ENCODE measurements at regions of chr9 and their contacts with region 1.

Region 1: DNA sequence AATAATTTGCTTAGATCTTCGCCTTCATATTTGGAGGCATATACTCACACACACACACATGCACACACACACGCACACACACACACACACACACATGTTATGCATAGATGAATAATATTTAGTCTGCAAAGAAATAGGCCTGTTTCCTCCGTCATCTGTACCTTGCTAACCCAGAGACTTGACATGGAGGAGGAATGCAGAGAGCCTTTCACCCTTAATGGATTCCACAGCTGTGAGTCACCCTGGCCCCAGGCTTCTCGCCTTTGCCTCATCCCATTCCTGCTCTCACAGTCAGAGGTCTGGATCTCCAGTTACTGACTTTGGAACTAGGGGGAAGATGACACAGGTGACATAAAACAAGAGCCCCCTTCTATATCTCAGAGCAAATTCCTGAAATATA is 29.7 kb downstream of the ZNF462 start:
- DNase-seq: peak; percentile 89
- H3K4me3 ChIP-seq: no peak overlapping the region
- H3K27ac ChIP-seq: peak overlapping the region; percentile 93
- H3K4me1 ChIP-seq: peaks cover 20% of the 10 kb centered on the region
- H3K27me3 ChIP-seq: no peaks in the 10 kb centered on the region
- CTCF ChIP-seq: no peak
- POLR2A ChIP-seq: no peak

Region 2: DNA sequence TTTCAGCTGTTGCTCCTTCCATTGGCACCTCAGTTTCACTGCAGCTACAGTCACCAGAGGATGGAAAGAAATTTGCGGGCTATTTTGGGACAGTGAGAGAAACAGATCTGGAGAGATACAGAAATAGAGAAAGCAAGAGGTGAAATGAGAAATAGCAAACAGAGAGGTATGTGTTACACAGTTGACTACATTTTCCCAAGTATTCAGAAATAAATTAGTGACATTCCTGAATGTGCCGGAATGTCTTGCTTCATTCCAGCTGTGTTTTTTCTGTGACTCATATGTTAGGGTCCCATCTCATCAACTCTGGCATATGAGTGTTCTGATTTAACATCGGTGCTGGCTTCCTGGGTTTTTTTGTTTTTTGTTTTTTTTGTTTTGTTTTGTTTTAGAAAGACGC is 93.5 kb before region 1 on chr9:
- CTCF ChIA-PET with region 1: no interaction called
- POLR2A ChIA-PET with region 1: no interaction called
- dilution Hi-C with region 1: no loop called
- intact Hi-C with region 1: loop called (anchors 1 kb)
- DNase-seq: peak; percentile 81
- H3K4me3 ChIP-seq: no peak overlapping the region
- H3K27ac ChIP-seq: peak overlapping the region; percentile 88
- H3K4me1 ChIP-seq: peaks cover 18% of the 10 kb centered on the region
- H3K27me3 ChIP-seq: no peaks in the 10 kb centered on the region
- CTCF ChIP-seq: no peak
- POLR2A ChIP-seq: no peak

Region 3: DNA sequence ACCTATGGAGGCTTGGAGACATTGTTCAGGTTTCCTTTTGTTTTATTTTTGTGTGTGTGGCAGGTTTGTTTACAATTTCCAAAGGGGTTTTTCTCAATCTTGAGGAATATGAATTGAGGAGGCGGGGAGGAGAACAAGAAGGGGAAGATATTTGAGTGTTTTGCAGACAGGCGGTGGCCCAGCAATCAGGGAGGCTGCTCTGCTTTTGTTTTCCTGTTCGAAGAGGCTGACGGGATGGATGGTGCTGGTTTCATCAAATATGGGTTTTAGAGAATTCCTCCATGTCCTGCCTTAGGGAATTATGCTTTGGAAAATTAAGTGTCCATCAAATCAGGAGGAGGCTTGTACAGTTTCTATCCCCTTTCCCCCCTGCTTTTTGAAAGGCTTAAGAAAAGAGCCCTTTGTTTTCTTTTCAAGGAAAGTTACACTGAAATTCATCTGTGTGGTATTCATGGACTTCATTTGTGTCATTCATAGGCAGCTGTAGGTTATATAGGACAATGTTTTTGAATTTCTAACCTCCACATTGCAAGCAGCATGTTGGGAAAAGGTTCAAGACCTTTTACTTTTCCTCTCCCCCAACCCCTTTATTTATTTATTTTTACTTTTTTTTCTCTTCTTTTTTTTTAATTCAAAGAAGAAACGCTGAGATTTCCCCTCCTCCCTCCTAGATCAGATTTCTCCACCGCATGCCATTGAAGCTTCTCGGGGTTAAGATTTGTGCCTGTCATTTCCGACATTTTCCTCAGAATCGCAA is 77.8 kb after region 1 on chr9:
- CTCF ChIA-PET with region 1: no interaction called
- POLR2A ChIA-PET with region 1: no interaction called
- dilution Hi-C with region 1: no loop called
- intact Hi-C with region 1: no loop called
- DNase-seq: no peak
- H3K4me3 ChIP-seq: no peak overlapping the region
- H3K27ac ChIP-seq: no peak overlapping the region
- H3K4me1 ChIP-seq: no peaks in the 10 kb centered on the region
- H3K27me3 ChIP-seq: no peaks in the 10 kb centered on the region
- CTCF ChIP-seq: no peak
- POLR2A ChIP-seq: no peak